Endothelial cell of umbilical vein (primary cell): ENCODE measurements at regions of chr10 and their contacts with region 1.

Region 1: DNA sequence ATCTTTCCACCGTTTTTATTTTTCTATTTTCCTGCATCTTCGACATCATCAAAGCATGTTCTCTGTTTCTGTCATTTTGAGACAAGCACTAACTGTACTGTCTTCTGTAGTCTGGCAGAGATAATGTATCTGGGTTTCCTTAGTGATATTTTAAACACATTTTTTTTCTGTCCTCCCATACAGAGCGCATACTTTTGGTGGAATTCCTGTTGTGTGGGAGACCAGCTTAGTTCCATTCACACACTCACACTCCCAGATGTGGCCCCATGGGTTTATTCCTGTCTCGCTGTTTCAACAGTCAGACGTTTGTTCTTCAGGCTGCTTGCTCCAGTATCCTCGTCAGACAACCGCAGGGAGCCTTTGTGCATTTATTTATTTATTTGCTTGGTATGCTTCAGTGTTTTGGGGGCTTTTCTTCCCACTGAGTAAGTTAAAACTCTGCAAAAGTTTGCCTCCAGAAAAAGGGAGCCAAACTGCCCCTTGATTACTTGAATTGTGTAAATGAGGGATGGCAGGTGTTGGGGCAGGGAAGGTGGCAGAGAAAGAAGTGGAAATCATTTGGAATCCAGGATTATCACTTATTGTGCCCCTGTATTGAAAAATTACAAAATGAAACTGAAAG is 456.8 kb upstream of the KLF6 start:
- DNase-seq: peak; percentile 89
- H3K4me3 ChIP-seq: peak overlapping the region in 1 of 3 experiments; percentile 63
- H3K27ac ChIP-seq: peak overlapping the region; percentile 99
- H3K4me1 ChIP-seq: peaks cover 50% of the 10 kb centered on the region
- H3K27me3 ChIP-seq: no peaks in the 10 kb centered on the region
- CTCF ChIP-seq: no peak
- POLR2A ChIP-seq: no peak

Region 2: DNA sequence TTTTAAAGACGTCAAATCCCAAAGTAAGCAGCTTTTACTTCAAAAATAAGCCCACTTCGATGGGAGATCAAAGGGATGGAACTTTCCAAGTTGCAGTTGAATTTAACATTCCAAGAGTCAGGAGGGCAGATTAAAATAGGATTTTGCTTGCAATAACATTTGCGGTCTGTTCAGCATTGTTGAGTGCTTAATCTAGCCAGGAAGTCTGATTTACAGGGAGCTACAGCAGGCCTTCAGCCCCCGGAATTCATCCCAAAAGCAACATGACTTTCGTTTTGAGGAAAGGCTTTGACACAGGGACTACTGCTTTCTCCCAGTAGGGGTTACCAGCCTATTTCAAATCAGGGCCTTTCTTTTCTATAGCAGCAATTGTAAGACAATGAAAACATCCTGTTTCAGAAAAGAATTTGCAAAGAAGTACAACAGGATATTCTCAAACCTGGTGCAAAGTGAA is 789.6 kb before region 1 on chr10:
- CTCF ChIA-PET with region 1: no interaction called
- POLR2A ChIA-PET with region 1: no interaction called
- dilution Hi-C with region 1: no loop called
- intact Hi-C with region 1: loop called (anchors 5 kb)
- DNase-seq: peak; percentile 85
- H3K4me3 ChIP-seq: no peak overlapping the region
- H3K27ac ChIP-seq: peak overlapping the region; percentile 98
- H3K4me1 ChIP-seq: peaks cover 43% of the 10 kb centered on the region
- H3K27me3 ChIP-seq: no peaks in the 10 kb centered on the region
- CTCF ChIP-seq: peak; percentile 30 to 40
- POLR2A ChIP-seq: no peak

Region 3: GRCh38 chr10:3811291-3811870 is 430.5 kb before region 1 on chr10:
- CTCF ChIA-PET with region 1: no interaction called
- POLR2A ChIA-PET with region 1: no interaction called
- dilution Hi-C with region 1: no loop called
- intact Hi-C with region 1: loop called (anchors 1 kb)
- DNase-seq: peak; percentile 70
- H3K4me3 ChIP-seq: no peak overlapping the region
- H3K27ac ChIP-seq: peak overlapping the region; percentile 100
- H3K4me1 ChIP-seq: peaks cover 55% of the 10 kb centered on the region
- H3K27me3 ChIP-seq: no peaks in the 10 kb centered on the region
- CTCF ChIP-seq: no peak
- POLR2A ChIP-seq: peak; percentile 28

Region 4: GRCh38 chr10:3935141-3935540 is 306.7 kb before region 1 on chr10:
- CTCF ChIA-PET with region 1: no interaction called
- POLR2A ChIA-PET with region 1: no interaction called
- dilution Hi-C with region 1: no loop called
- intact Hi-C with region 1: loop called (anchors 2 kb)
- DNase-seq: peak; percentile 26
- H3K4me3 ChIP-seq: no peak overlapping the region
- H3K27ac ChIP-seq: peak overlapping the region; percentile 75
- H3K4me1 ChIP-seq: peaks cover 24% of the 10 kb centered on the region
- H3K27me3 ChIP-seq: no peaks in the 10 kb centered on the region
- CTCF ChIP-seq: no peak
- POLR2A ChIP-seq: no peak

Region 5: GRCh38 chr10:4131407-4132228 is 110.2 kb before region 1 on chr10:
- CTCF ChIA-PET with region 1: interaction called, 5 read pairs
- POLR2A ChIA-PET with region 1: no interaction called
- dilution Hi-C with region 1: no loop called
- intact Hi-C with region 1: loop called (anchors 1 kb)
- DNase-seq: peak; percentile 86
- H3K4me3 ChIP-seq: peak overlapping the region in 1 of 3 experiments; percentile 47
- H3K27ac ChIP-seq: peak overlapping the region; percentile 92
- H3K4me1 ChIP-seq: peaks cover 48% of the 10 kb centered on the region
- H3K27me3 ChIP-seq: no peaks in the 10 kb centered on the region
- CTCF ChIP-seq: no peak
- POLR2A ChIP-seq: no peak

Region 6: GRCh38 chr10:4541292-4541691 is 299.5 kb after region 1 on chr10:
- CTCF ChIA-PET with region 1: no interaction called
- POLR2A ChIA-PET with region 1: no interaction called
- dilution Hi-C with region 1: no loop called
- intact Hi-C with region 1: loop called (anchors 2 kb)
- DNase-seq: peak; percentile 94
- H3K4me3 ChIP-seq: no peak overlapping the region
- H3K27ac ChIP-seq: peak overlapping the region; percentile 93
- H3K4me1 ChIP-seq: peaks cover 10% of the 10 kb centered on the region
- H3K27me3 ChIP-seq: no peaks in the 10 kb centered on the region
- CTCF ChIP-seq: peak in 1 of 2 donors; percentile 18
- POLR2A ChIP-seq: no peak

Region 7: DNA sequence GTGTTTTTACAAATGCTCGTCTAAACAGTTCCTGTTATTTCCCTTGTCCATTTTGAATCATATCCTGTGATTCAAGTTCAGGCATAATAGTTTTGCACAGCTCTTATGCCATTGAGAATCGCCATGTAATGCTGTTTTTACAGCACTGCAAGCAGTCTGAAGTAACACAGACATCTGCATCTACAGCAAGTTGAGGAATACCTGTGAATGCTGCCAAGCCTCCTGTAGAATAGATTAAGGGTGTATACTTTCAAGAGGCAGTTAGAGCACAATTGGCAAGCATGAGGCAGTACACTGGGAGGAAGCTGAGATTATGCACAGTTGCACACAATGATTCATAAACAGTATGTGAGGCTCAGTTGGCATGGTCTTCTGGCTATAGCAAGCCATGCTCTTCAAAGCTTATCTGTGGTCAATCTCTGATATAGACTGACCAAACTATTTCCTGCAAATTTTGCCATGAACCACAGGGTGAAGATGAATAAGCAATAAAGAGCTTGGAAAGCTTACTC is 462.3 kb after region 1 on chr10:
- CTCF ChIA-PET with region 1: no interaction called
- POLR2A ChIA-PET with region 1: no interaction called
- dilution Hi-C with region 1: no loop called
- intact Hi-C with region 1: loop called (anchors 1 kb)
- DNase-seq: peak; percentile 98
- H3K4me3 ChIP-seq: no peak overlapping the region
- H3K27ac ChIP-seq: peak overlapping the region; percentile 92
- H3K4me1 ChIP-seq: peaks cover 45% of the 10 kb centered on the region
- H3K27me3 ChIP-seq: no peaks in the 10 kb centered on the region
- CTCF ChIP-seq: no peak
- POLR2A ChIP-seq: peak; percentile 13